ENCODE measurements at regions of chr16 and their contacts with region 1.

Region 1: GRCh38 chr16:57648590-57649442 is 19.3 kb upstream of the ADGRG3 start:
- DNase-seq: peak; percentile 90 to 93
- ATAC-seq: peak; percentile 60 to 87 (median 66)
- H3K4me3 ChIP-seq: peak overlapping the region; percentile 54
- H3K4me3 Mint-ChIP-seq: peak overlapping the region; percentile 93
- H3K27ac ChIP-seq: peak overlapping the region; percentile 84
- H3K27ac Mint-ChIP-seq: peak overlapping the region; percentile 91 to 96
- H3K4me1 ChIP-seq: peaks cover 98% of the 10 kb centered on the region
- H3K4me1 Mint-ChIP-seq: peaks cover 65 to 66% of the 10 kb centered on the region in 2 donors
- H3K27me3 ChIP-seq: no peaks in the 10 kb centered on the region
- H3K27me3 Mint-ChIP-seq: no peaks in the 10 kb centered on the region
- CTCF ChIP-seq: peak; percentile 100

Region 2: DNA sequence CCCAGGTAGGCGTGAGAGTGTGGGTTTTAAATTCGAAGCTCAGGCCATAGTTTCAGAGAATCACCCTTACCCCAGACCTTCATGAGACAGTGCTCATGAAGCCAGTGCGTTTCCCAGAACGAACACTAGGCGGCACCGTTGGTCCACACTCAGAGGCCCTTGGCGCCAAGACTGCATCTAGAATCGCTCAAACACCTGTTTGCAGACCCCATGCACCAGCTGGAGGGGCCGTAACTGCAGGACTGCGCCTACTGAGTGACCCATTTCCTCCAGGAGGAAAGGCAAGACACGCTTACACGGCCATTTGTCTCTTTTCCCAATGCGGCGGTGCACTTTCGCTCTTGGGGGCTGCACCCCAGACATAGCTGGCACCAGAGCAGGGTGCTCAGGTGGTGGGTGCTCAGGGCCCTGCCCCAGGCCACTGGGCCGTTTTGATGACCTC is 72.4 kb before region 1 on chr16:
- intact Hi-C with region 1: loop called (anchors 1 kb)
- DNase-seq: peak; percentile 86 to 92
- ATAC-seq: peak; percentile 58 to 70 (median 69)
- H3K4me3 ChIP-seq: no peak overlapping the region
- H3K4me3 Mint-ChIP-seq: peak overlapping the region; percentile 82
- H3K27ac ChIP-seq: peak overlapping the region; percentile 72
- H3K27ac Mint-ChIP-seq: peak overlapping the region; percentile 94 to 97
- H3K4me1 ChIP-seq: peaks cover 58% of the 10 kb centered on the region
- H3K4me1 Mint-ChIP-seq: peaks cover 50 to 61% of the 10 kb centered on the region in 2 donors
- H3K27me3 ChIP-seq: no peaks in the 10 kb centered on the region
- H3K27me3 Mint-ChIP-seq: no peaks in the 10 kb centered on the region
- CTCF ChIP-seq: peak; percentile 87

Region 3: GRCh38 chr16:57601801-57602478 is 46.9 kb before region 1 on chr16:
- intact Hi-C with region 1: loop called (anchors 1 kb)
- DNase-seq: peak; percentile 50 to 84
- ATAC-seq: peak; percentile 75 to 85 (median 84)
- H3K4me3 ChIP-seq: no peak overlapping the region
- H3K4me3 Mint-ChIP-seq: peak overlapping the region; percentile 72
- H3K27ac ChIP-seq: peak overlapping the region; percentile 94
- H3K27ac Mint-ChIP-seq: peak overlapping the region; percentile 80 to 94
- H3K4me1 ChIP-seq: peaks cover 68% of the 10 kb centered on the region
- H3K4me1 Mint-ChIP-seq: peaks cover 80 to 84% of the 10 kb centered on the region in 2 donors
- H3K27me3 ChIP-seq: no peaks in the 10 kb centered on the region
- H3K27me3 Mint-ChIP-seq: no peaks in the 10 kb centered on the region
- CTCF ChIP-seq: no peak

Region 4: GRCh38 chr16:57720142-57720575 is 71.3 kb after region 1 on chr16:
- intact Hi-C with region 1: loop called (anchors 2 kb)
- DNase-seq: peak; percentile 61 to 67
- ATAC-seq: peak; percentile 86 to 93 (median 90)
- H3K4me3 ChIP-seq: no peak overlapping the region
- H3K4me3 Mint-ChIP-seq: no peak overlapping the region
- H3K27ac ChIP-seq: no peak overlapping the region
- H3K27ac Mint-ChIP-seq: no peak overlapping the region
- H3K4me1 ChIP-seq: no peaks in the 10 kb centered on the region
- H3K4me1 Mint-ChIP-seq: peaks cover 0 to 14% of the 10 kb centered on the region in 2 donors
- H3K27me3 ChIP-seq: no peaks in the 10 kb centered on the region
- H3K27me3 Mint-ChIP-seq: no peaks in the 10 kb centered on the region
- CTCF ChIP-seq: peak; percentile 51

Region 5: GRCh38 chr16:57764341-57765159 is 115.7 kb after region 1 on chr16:
- intact Hi-C with region 1: no loop called
- DNase-seq: peak; percentile 18 to 56
- ATAC-seq: peak; percentile 74 to 94 (median 90)
- H3K4me3 ChIP-seq: no peak overlapping the region
- H3K4me3 Mint-ChIP-seq: no peak overlapping the region
- H3K27ac ChIP-seq: no peak overlapping the region
- H3K27ac Mint-ChIP-seq: peak overlapping the region in 1 of 2 donors; percentile 16
- H3K4me1 ChIP-seq: no peaks in the 10 kb centered on the region
- H3K4me1 Mint-ChIP-seq: peaks cover 0 to 13% of the 10 kb centered on the region in 2 donors
- H3K27me3 ChIP-seq: no peaks in the 10 kb centered on the region
- H3K27me3 Mint-ChIP-seq: no peaks in the 10 kb centered on the region
- CTCF ChIP-seq: no peak

Measured in natural killer cell (primary cell).